ENCODE measurements at regions of chr7 and their contacts with region 1.

Region 1: DNA sequence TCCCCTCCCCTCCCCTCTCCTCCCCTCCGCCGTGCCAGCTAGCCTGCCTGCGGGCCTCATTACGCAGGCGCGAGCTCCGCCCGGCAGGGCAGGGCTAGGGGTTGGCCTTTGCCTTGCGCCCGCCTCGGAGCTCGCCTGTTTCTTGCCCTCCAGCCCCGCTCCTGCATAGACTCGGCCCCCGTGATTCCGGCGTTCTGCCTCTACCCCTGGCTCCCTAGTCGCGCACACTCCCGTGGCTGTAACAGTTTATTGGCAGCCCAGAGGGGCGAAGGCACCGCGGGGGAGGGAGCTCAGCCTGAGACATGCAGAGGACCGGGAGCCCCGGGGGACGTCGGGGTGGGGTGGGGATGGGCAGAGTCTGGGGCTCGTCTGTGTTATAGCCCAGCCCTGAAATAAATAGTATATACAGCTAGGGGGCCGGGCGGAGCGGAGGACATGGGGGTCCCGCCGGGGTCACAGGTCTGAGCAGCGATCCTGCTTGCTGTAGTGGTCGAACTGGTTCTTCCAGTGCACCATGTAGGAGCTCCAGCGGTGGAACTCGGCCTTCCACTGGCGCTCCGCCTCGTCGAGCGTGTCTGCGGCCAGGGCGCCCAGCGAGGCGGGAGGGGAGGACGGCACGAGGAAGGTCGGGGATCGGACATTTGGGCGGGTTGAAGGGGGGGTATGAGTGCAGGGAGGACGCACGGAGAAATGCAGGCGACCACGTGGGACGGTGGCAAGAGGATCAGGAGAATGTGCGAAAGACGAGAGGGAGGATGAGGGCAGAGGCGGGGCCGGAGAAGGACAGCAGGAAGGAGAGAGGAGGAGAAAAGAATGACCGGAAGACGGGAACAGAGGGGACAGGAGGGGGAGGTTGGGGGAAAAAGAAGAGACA is 483 bp upstream of the UFSP1 start:
- DNase-seq: peak; percentile 93 to 94
- ATAC-seq: peak; percentile 90 to 97 (median 94)
- H3K4me3 ChIP-seq: peak overlapping the region; percentile 55 to 82 (median 75)
- H3K27ac ChIP-seq: peak overlapping the region; percentile 78 to 91 (median 88)
- H3K4me1 ChIP-seq: peaks cover 16 to 52% (median 38%) of the 10 kb centered on the region in 9 donors
- H3K27me3 ChIP-seq: peaks cover 2 to 46% (median 7%) of the 10 kb centered on the region in 7 donors
- CTCF ChIP-seq: peak in 4 of 9 donors; percentile 7 to 23 (median 21)

Region 2: DNA sequence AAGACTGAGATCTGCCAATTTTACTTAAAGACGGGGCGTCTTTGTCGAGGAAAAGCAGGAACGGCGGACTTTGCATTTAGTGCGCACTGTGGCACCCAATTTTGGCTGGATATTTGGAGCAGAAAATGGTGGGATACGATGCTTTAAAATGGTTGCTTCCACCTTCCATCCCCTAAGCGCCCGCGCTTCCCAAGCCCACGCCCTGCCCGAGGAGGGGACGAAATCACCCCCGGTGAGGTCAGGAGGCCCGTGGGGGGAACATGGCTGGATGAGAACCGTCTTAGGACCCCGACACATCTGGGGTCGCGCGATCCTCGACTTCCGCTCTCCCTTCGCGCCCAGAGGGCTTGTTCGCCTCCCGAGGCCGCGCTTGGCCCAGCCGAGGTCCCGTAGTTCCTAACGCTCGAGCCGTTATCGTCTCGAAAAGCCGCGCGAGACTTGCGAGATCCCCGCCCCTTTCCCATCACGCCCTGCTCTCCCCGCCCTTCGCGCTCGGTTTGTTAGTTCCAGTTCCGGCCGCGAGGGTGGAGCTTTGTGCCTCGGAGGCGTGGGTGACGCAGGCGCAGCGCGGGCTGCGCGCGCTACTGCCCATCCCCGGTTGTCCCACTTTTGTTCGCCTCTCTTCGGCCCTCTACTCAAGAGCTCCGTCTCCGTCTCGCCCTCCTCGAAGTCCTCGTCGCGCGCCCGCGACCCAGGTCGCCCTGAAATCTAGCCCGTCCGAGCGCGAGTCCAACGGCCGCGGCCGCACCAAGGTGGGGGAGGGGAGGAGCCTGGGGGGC is 15.2 kb before region 1 on chr7 and contains the start of gene SRRT:
- intact Hi-C with region 1: loop called in 2 of 10 experiments (anchors 2 kb)
- DNase-seq: peak; percentile 99
- ATAC-seq: peak; percentile 94 to 99 (median 98)
- H3K4me3 ChIP-seq: peak within 1 kb of the TSS; percentile 77 to 97 (median 87)
- H3K27ac ChIP-seq: peak within 1 kb of the TSS; percentile 86 to 97 (median 95)
- H3K4me1 ChIP-seq: peaks cover 2 to 50% (median 40%) of the 10 kb centered on the region in 9 donors
- H3K27me3 ChIP-seq: no peaks in the 10 kb centered on the region
- CTCF ChIP-seq: peak; percentile 35 to 55 (median 48)
- total RNA-seq, gene SRRT: 38.4 to 69.5 (median 49.6) TPM

Region 3: DNA sequence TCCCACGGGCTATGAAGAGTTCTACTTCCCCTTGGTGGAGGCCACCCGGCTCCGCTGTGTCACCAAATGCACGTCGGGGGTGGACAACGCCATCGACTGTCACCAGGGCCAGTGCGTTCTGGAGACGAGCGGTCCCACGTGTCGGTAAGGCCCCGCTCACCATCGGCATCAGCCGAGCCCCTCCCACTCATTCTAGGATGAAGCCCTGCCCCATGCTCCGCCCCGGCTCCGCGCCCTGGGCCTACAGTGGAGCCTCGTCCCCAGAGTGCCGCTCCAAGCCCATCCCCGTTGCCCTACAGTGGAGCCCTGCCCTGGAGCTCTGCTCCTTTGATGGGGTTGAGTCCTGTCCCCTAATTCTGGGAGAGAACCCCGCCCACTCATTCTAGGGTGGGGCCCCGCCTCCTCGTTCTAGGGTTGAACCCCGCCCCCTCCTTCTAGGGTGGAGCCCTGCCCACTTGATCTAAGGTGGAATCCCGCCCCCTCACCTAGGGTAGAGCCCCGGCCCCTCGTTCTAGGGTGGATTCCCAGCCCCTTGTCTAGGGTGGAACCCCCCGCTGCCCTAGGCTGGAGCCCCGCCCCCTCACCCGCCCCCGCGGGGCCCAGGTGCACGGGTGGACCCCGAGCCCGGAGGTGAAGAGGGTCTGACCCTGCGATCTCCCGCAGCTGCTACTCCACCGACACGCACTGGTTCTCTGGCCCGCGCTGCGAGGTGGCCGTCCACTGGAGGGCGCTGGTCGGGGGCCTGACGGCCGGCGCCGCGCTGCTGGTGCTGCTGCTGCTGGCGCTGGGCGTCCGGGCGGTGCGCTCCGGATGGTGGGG is 75.9 kb after region 1 on chr7:
- intact Hi-C with region 1: loop called in 1 of 10 experiments (anchors 5 kb)
- DNase-seq: peak; percentile 48 to 68
- ATAC-seq: peak; percentile 49 to 74 (median 58)
- H3K4me3 ChIP-seq: peak overlapping the region in 9 of 10 donors; percentile 4 to 31 (median 22)
- H3K27ac ChIP-seq: no peak overlapping the region
- H3K4me1 ChIP-seq: peaks cover 4 to 18% (median 14%) of the 10 kb centered on the region in 9 donors
- H3K27me3 ChIP-seq: peaks cover 35 to 90% (median 76%) of the 10 kb centered on the region in 7 donors
- CTCF ChIP-seq: peak in 8 of 9 donors; percentile 53 to 76 (median 66)

Region 4: GRCh38 chr7:101058355-101058754 is 168.4 kb after region 1 on chr7:
- intact Hi-C with region 1: loop called in 2 of 10 experiments (anchors 1 to 5 kb)
- DNase-seq: peak; percentile 69 to 74
- ATAC-seq: peak in 6 of 8 donors; percentile 58 to 93 (median 80)
- H3K4me3 ChIP-seq: no peak overlapping the region
- H3K27ac ChIP-seq: no peak overlapping the region
- H3K4me1 ChIP-seq: no peaks in the 10 kb centered on the region
- H3K27me3 ChIP-seq: peaks cover 0 to 85% (median 66%) of the 10 kb centered on the region in 7 donors
- CTCF ChIP-seq: no peak

Region 5: DNA sequence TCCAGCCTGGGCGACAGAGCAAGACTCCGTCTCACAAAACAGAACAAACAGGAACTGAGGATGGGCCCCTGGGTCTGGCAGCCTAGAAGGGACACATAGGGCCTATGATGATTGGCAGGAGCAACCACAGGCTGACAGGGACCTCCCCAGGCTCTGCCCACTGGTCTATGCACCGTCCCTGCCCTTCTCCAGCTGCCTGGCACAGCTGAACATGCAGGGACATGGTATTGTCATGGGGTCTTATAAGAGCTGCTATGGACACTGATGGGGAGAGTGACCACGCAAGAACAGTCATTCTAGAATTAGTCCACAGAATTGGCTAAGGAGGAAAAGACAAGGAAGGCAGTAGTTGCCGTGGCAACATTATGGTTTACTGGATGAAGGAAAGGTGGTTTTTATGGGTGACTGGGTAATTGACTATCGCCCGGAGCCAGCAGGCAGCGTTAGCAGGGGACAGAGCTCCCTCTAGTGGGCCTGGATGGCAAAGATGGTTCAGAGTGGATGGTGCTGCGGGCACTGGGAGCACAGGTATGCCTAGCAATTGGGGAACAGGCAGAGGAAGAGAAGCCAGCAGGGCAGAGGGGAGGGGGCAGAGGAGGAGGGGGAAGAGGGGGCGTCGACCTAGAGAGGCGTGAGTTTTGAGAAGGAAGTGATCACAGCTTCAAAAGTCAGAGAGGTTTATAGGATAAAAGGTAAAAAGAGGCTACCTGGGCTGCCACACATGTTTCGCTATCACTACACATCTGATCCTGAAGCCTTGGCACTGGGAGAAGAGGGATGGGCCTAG is 187.5 kb after region 1 on chr7:
- intact Hi-C with region 1: loop called in 6 of 10 experiments (anchors 5 kb)
- DNase-seq: peak; percentile 66 to 70
- ATAC-seq: peak; percentile 75 to 90 (median 86)
- H3K4me3 ChIP-seq: no peak overlapping the region
- H3K27ac ChIP-seq: no peak overlapping the region
- H3K4me1 ChIP-seq: peaks cover 0 to 5% (median 0%) of the 10 kb centered on the region in 9 donors
- H3K27me3 ChIP-seq: peaks cover 0 to 2% (median 0%) of the 10 kb centered on the region in 7 donors
- CTCF ChIP-seq: peak; percentile 73 to 86 (median 83)

Region 6: GRCh38 chr7:101273206-101273605 is 383.2 kb after region 1 on chr7:
- intact Hi-C with region 1: loop called in 1 of 10 experiments (anchors 10 kb)
- DNase-seq: no peak
- ATAC-seq: no peak
- H3K4me3 ChIP-seq: no peak overlapping the region
- H3K27ac ChIP-seq: no peak overlapping the region
- H3K4me1 ChIP-seq: no peaks in the 10 kb centered on the region
- H3K27me3 ChIP-seq: peaks cover 0 to 49% (median 17%) of the 10 kb centered on the region in 7 donors
- CTCF ChIP-seq: no peak

Region 7: DNA sequence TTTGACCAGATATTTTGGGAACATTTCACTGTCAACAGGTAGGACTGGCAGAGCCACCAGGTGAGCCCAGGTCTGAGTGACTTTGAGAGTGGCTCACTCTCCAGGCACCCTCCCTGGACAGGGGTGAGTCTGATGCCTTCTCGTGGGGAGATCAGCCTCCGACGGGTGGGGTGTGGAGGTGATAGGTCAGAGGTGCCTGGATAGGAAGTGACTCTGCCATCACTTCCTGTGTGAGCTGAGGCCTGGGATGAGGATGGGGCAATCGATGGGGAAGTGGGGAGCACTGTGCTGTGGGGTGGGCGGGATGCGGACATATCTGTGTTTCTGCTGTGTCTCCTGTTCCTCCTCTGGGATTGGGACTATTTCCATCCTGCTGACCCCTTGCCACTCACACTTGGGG is 397.0 kb after region 1 on chr7:
- intact Hi-C with region 1: loop called in 1 of 10 experiments (anchors 10 kb)
- DNase-seq: no peak
- ATAC-seq: no peak
- H3K4me3 ChIP-seq: no peak overlapping the region
- H3K27ac ChIP-seq: no peak overlapping the region
- H3K4me1 ChIP-seq: peaks cover 0 to 4% (median 0%) of the 10 kb centered on the region in 9 donors
- H3K27me3 ChIP-seq: peaks cover 0 to 39% (median 16%) of the 10 kb centered on the region in 7 donors
- CTCF ChIP-seq: no peak

Measured in heart right ventricle (tissue), 16 donors.